Dendritic cell treated with granulocyte-macrophage colony-stimulating factor and Interleukin-4, amounts not matched to agents 40 ng/mL and 50 ng/mL, for 4 days (primary cell): ENCODE measurements at regions of chr1 and their contacts with region 1.

Region 1: DNA sequence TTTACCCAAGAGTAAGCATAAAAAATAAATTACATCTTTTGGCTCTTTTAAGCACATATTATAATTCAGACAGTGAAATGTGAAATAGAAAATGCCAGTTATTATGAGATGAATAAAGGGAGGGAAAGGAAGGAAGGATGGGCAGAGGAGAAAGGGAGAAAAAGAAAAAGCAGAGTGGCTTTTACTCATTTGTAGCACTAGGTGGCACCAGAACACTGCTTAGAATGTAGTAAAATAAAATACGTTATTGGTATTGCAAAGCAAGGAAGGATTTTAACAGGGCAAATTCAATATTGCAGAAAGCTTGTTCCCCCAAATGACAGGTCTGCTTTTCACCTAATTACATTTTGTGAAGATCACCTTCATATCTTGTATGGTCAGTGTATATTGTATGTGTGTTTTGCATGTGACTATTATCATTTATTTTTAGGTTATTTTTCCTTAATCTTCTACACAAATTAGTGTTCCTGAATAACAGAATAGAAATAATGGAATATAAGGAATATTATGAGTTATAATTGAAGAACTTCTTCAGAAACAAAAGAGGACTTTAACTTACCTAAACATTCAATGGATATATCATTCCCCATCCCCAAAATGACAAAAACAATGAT is 9.1 kb upstream of the PCNX2 start:
- H3K4me3 Mint-ChIP-seq: no peak overlapping the region
- H3K27ac Mint-ChIP-seq: no peak overlapping the region
- H3K4me1 Mint-ChIP-seq: no peaks in the 10 kb centered on the region
- H3K27me3 Mint-ChIP-seq: no peaks in the 10 kb centered on the region

Region 2: GRCh38 chr1:233252441-233252840 is 52.2 kb before region 1 on chr1:
- intact Hi-C with region 1: no loop called
- H3K4me3 Mint-ChIP-seq: no peak overlapping the region
- H3K27ac Mint-ChIP-seq: no peak overlapping the region
- H3K4me1 Mint-ChIP-seq: peaks cover 19% of the 10 kb centered on the region
- H3K27me3 Mint-ChIP-seq: no peaks in the 10 kb centered on the region

Region 3: DNA sequence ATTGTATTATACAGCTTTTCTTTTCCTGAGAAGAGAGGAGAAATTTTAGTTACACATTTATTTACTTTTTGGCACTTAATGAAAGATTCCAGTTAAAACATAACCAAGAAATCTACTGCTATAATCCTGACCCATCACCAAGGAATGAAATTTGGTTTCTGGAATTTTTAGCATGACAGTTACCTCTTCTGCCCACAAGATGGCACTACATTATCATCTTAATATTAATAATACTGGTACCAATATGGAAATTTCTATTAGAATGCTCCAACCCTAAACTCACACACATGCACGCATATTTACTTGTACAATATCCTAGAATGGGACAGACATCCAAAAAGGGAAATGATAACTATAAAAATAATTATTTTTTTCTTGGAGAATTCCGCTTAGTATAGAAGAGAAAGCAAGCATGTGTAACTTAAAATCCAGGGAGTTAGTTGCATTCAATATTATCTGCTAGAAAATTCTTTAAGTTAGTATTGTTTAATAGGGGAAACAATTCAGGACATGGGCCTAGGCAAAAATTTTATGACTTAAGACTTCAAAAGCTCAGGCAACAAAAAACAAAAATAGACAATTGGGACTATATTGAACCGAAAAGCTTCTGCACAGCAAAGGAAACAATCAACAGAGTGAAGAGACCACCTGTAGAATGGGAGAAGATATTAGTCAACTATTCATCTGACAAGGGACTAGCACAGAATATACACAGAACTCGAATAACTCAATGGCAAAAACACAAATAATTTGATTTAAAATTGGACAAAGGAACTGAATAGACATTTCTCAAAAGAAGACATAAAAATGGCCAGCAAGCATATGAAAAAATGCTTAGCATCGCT is 60.3 kb after region 1 on chr1:
- intact Hi-C with region 1: loop called (anchors 5 kb)
- H3K4me3 Mint-ChIP-seq: no peak overlapping the region
- H3K27ac Mint-ChIP-seq: no peak overlapping the region
- H3K4me1 Mint-ChIP-seq: no peaks in the 10 kb centered on the region
- H3K27me3 Mint-ChIP-seq: no peaks in the 10 kb centered on the region

Region 4: GRCh38 chr1:233394860-233395717 is 90.5 kb after region 1 on chr1:
- intact Hi-C with region 1: loop called (anchors 10 kb)
- H3K4me3 Mint-ChIP-seq: no peak overlapping the region
- H3K27ac Mint-ChIP-seq: no peak overlapping the region
- H3K4me1 Mint-ChIP-seq: peaks cover 12% of the 10 kb centered on the region
- H3K27me3 Mint-ChIP-seq: peaks cover 16% of the 10 kb centered on the region

Region 5: DNA sequence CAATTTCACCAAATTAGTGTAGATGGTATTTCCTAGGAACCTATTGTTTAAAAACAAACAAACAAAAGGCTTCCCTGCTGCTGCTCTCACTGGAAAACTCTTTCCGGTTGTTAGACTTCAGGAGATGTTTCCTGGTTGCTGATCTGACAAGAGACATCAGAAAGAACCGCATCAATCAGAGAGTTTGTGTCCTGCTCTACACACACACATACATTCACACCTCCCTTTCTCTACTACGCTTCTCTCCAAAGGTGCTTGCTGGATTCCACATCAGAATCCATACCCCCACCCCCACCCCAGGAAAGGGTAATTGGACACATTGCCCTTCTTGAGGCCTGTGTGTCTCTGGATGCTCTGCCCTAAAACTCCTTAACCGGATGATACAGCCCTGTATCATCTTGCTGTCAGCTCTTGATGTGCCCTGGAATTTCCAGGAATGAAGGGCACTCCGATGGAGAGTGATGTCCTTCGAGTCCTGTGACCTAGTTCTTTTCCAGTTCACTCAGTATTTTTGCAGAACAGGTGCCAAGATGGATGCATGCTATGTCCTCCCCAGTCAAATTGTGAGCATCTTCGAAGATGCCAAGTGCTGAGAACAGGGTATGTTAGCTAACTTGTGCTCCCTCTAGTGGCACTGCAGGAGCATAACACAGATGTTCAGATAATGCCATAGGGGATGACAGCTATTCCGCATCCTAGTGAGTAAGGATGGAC is 486.2 kb after region 1 on chr1:
- intact Hi-C with region 1: loop called (anchors 1 kb)
- H3K4me3 Mint-ChIP-seq: no peak overlapping the region
- H3K27ac Mint-ChIP-seq: no peak overlapping the region
- H3K4me1 Mint-ChIP-seq: no peaks in the 10 kb centered on the region
- H3K27me3 Mint-ChIP-seq: peaks cover 8% of the 10 kb centered on the region

Region 6: GRCh38 chr1:234065794-234066447 is 761.3 kb after region 1 on chr1:
- intact Hi-C with region 1: loop called (anchors 2 kb)
- H3K4me3 Mint-ChIP-seq: no peak overlapping the region
- H3K27ac Mint-ChIP-seq: no peak overlapping the region
- H3K4me1 Mint-ChIP-seq: no peaks in the 10 kb centered on the region
- H3K27me3 Mint-ChIP-seq: peaks cover 7% of the 10 kb centered on the region